Activated T-helper 1 cell treated with anti-CD3 and anti-CD28 coated beads, Interleukin-12 subunit alpha, Interleukin-12 subunit beta, Interleukin-2, Interleukin-4 antibody, amounts not matched to agents 30 ng/mL and 10 ng/mL and 1 ng/mL, durations not matched to agents 14 hours and 24 hours and 36 hours (primary cell): ENCODE measurements at regions of chr4 and their contacts with region 1.

Region 1: GRCh38 chr4:17468371-17469221 is 43.3 kb downstream of the QDPR start:
- DNase-seq: no peak
- H3K4me3 Mint-ChIP-seq: no peak overlapping the region
- H3K27ac Mint-ChIP-seq: no peak overlapping the region
- H3K4me1 Mint-ChIP-seq: peaks cover 5% of the 10 kb centered on the region
- H3K27me3 Mint-ChIP-seq: peaks cover 1% of the 10 kb centered on the region

Region 2: GRCh38 chr4:17347445-17347844 is 121.2 kb before region 1 on chr4:
- intact Hi-C with region 1: loop called (anchors 1 kb)
- DNase-seq: peak; percentile 8
- H3K4me3 Mint-ChIP-seq: no peak overlapping the region
- H3K27ac Mint-ChIP-seq: no peak overlapping the region
- H3K4me1 Mint-ChIP-seq: no peaks in the 10 kb centered on the region
- H3K27me3 Mint-ChIP-seq: peaks cover 3% of the 10 kb centered on the region